ENCODE measurements at regions of chr20 and their contacts with region 1.

Region 1: DNA sequence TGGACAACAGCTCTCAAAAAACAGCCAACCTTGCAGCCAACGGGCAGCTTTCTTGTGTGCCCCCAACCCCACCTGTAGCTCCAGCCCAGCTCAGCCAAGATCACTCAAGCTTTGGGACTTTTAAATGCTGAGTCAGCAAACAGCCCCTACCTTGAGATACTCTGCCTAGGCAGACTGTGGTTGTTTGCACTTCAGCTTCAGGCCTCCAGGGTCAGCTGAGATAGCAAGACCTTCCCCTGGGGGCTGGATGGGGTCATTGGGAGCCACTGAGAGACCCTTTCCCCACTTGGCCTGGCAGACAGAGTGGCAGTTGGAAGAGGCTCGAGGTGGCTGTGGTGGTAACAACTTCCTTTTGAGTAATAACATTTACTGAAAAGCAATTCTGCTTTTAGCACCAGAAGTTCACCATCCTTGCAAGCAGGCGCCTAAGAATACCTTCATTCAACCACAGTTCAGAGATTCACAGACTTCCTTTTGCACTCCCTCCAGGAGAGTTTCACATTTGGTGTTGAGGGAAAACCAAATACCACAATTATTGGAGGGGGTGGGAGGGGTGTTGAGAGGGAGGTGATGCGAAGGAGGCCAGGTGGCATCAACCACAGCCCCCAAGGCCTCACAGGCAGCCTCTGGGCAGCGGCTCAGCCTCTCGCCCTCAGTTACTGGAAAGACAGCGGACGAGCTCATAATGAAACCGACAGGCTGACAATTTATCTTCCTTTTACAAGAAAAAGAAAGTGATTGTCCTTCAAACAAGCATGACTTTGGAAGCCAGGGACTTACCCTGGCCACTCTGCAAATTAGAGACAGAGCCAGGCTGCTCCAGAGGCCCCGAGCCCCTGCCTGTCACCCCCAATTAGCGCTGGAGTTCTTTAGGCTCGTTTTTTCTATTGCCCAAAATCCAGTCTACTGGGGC is 148.1 kb downstream of the CEBPB start:
- DNase-seq: peak; percentile 83
- ATAC-seq: peak; percentile 83
- H3K4me3 Mint-ChIP-seq: peak overlapping the region; percentile 68
- H3K27ac Mint-ChIP-seq: peak overlapping the region; percentile 88
- H3K4me1 Mint-ChIP-seq: peaks cover 77% of the 10 kb centered on the region
- H3K27me3 Mint-ChIP-seq: no peaks in the 10 kb centered on the region

Region 2: DNA sequence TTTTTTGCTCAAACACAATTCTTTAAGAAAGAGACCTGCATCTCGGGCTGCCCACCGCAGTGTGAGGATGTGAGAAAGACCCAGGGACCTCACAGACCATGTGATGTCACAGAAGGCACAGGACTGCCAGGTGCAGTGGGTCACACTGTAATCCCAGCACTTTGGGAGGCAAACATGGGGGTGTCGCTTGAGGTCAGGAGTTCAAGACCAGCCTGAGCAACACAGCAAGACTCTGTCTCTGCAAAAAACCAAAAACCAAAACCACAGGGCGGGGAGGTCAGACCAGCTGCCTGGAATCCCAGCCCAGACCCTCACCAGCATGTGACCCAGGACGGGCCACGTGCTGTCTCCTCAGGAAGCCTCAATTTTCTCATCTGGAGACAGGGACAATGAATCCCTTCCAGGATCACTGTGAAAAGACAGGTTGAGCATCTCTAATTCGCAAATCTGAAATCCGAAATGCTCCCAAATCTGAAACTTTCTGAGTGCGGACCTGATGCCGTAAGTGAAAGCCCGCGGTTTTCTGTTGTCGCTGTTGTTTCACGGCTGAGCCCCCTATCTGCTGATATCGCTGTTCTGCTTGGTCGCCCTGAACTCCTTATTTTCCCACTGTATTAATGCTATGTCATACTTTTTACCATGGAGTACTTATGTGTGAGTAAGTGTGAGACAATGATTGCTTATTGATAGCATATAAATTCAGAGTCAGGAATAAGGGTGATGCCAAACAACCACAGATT is 11.9 kb after region 1 on chr20:
- CTCF ChIA-PET with region 1: interaction called, 12 read pairs
- POLR2A ChIA-PET with region 1: interaction called, 7 read pairs
- DNase-seq: no peak
- ATAC-seq: no peak
- H3K4me3 Mint-ChIP-seq: no peak overlapping the region
- H3K27ac Mint-ChIP-seq: no peak overlapping the region
- H3K4me1 Mint-ChIP-seq: peaks cover 61% of the 10 kb centered on the region
- H3K27me3 Mint-ChIP-seq: peaks cover 2% of the 10 kb centered on the region

Region 3: GRCh38 chr20:50381888-50382593 is 43.3 kb after region 1 on chr20:
- CTCF ChIA-PET with region 1: interaction called, 4 read pairs
- POLR2A ChIA-PET with region 1: interaction called, 11 read pairs
- DNase-seq: peak; percentile 57
- ATAC-seq: peak; percentile 32
- H3K4me3 Mint-ChIP-seq: peak overlapping the region; percentile 62
- H3K27ac Mint-ChIP-seq: peak overlapping the region; percentile 79
- H3K4me1 Mint-ChIP-seq: peaks cover 72% of the 10 kb centered on the region
- H3K27me3 Mint-ChIP-seq: no peaks in the 10 kb centered on the region

Measured in activated CD8-positive, alpha-beta T cell treated with anti-CD3 and anti-CD28 coated beads, Interleukin-2, amount 10 ng/mL, durations not matched to agents 7 days and 5 days (primary cell).